AG04450 (cell line): ENCODE measurements at regions of chr9 and their contacts with region 1.

Region 1: GRCh38 chr9:94922098-94922607 is 195.7 kb downstream of the AOPEP start:
- DNase-seq: peak; percentile 95
- H3K4me3 ChIP-seq: no peak overlapping the region
- H3K27ac ChIP-seq: peak overlapping the region; percentile 96
- H3K27me3 ChIP-seq: no peaks in the 10 kb centered on the region
- CTCF ChIP-seq: no peak

Region 2: GRCh38 chr9:94865582-94866452 is 56.3 kb before region 1 on chr9:
- CTCF ChIA-PET with region 1: interaction called, 4 read pairs
- POLR2A ChIA-PET with region 1: interaction called, 10 read pairs
- DNase-seq: peak; percentile 78
- H3K4me3 ChIP-seq: no peak overlapping the region
- H3K27ac ChIP-seq: peak overlapping the region; percentile 80
- H3K27me3 ChIP-seq: no peaks in the 10 kb centered on the region
- CTCF ChIP-seq: no peak

Region 3: DNA sequence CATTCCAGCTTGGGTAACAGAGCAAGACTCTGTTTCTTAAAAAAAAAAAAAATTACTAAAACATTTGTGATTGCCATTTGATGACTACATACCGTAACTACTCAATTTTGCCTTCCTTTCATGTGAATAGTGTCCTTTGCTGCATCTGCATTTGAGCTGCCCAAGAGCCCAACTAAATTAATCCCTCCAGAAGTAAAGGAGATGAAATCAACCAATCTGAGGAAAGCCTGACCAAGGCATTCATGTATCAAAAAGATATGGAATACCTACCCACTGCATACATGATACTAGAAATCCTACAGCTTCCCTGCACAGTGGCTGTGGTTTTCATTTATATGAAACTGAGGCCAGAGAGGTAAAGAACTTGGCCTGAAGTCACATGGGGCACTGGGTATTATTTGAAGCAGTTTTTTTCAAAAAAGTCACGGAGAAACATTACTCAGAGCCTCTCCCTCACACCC is 18.2 kb before region 1 on chr9:
- CTCF ChIA-PET with region 1: no interaction called
- POLR2A ChIA-PET with region 1: interaction called, 14 read pairs
- DNase-seq: peak; percentile 42
- H3K4me3 ChIP-seq: no peak overlapping the region
- H3K27ac ChIP-seq: peak overlapping the region; percentile 39
- H3K27me3 ChIP-seq: no peaks in the 10 kb centered on the region
- CTCF ChIP-seq: no peak